HCT116 (cell line): ENCODE measurements at regions of chr15 and their contacts with region 1.

Region 1: GRCh38 chr15:89087830-89088604 is at the start of gene ABHD2:
- DNase-seq: peak; percentile 100
- ATAC-seq: peak; percentile 98
- H3K4me3 ChIP-seq: peak within 1 kb of the TSS; percentile 86 to 89
- H3K27ac ChIP-seq: peak within 1 kb of the TSS; percentile 57
- H3K4me1 ChIP-seq: peaks cover 12 to 35% of the 10 kb centered on the region in 2 experiments
- H3K27me3 ChIP-seq: no peaks in the 10 kb centered on the region
- CTCF ChIP-seq: no peak
- POLR2A ChIP-seq: no peak
- RAD21 ChIP-seq: no peak
- total RNA-seq, gene ABHD2: 40.8 TPM

Region 2: GRCh38 chr15:89101302-89102191 is 13.5 kb after region 1 on chr15:
- CTCF ChIA-PET with region 1: interaction called, 5 read pairs
- POLR2A ChIA-PET with region 1: interaction called, 17 read pairs
- RAD21 ChIA-PET with region 1: no interaction called
- intact Hi-C with region 1: no loop called
- DNase-seq: peak; percentile 87
- ATAC-seq: peak; percentile 84
- H3K4me3 ChIP-seq: peak overlapping the region in 1 of 2 experiments; percentile 40; a peak in 2 of 4 replicates
- H3K27ac ChIP-seq: peak overlapping the region; percentile 42; the same call in 1 of the 2 replicates
- H3K4me1 ChIP-seq: peaks cover 33 to 59% of the 10 kb centered on the region in 2 experiments
- H3K27me3 ChIP-seq: no peaks in the 10 kb centered on the region
- CTCF ChIP-seq: no peak
- POLR2A ChIP-seq: no peak
- RAD21 ChIP-seq: no peak